ENCODE measurements at regions of chr4 and their contacts with region 1.

Region 1: GRCh38 chr4:139603576-139604387 is 47.8 kb upstream of the SETD7 start:
- DNase-seq: peak; percentile 80
- H3K4me3 Mint-ChIP-seq: no peak overlapping the region
- H3K27ac Mint-ChIP-seq: no peak overlapping the region
- H3K4me1 Mint-ChIP-seq: peaks cover 41% of the 10 kb centered on the region
- H3K27me3 Mint-ChIP-seq: no peaks in the 10 kb centered on the region
- CTCF ChIP-seq: peak; percentile 49

Region 2: DNA sequence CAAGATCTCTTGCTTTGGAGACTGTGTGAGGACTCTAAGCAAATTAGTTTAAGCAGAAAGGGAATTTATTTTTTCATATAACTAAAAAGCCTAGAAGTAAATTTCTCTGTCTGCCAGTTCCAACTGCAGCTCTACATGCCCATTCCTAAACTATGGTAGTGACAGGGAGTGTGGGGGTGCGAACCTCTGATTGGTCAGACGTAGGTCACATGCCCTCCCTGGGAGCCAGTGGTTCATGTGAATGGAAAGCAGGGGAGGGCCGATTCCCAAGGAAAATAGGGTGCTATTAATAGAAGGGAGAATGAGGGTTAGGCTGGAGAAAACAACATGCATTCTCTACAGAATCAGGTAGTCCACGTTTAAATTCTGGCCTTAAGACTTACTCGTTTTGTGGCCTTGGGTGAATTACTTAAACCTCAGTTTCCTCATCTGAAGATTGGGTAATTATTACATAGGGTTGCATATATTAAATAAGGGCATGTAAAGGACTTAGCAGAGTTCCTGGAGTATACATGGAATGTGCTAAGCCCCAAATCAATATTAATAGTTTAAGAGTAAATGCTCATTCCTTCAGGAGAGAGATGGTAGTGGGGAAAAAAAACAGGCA is 142.7 kb before region 1 on chr4:
- CTCF ChIA-PET with region 1: no interaction called
- POLR2A ChIA-PET with region 1: no interaction called
- intact Hi-C with region 1: no loop called
- DNase-seq: no peak
- H3K4me3 Mint-ChIP-seq: no peak overlapping the region
- H3K27ac Mint-ChIP-seq: no peak overlapping the region
- H3K4me1 Mint-ChIP-seq: peaks cover 45% of the 10 kb centered on the region
- H3K27me3 Mint-ChIP-seq: no peaks in the 10 kb centered on the region
- CTCF ChIP-seq: no peak

Region 3: DNA sequence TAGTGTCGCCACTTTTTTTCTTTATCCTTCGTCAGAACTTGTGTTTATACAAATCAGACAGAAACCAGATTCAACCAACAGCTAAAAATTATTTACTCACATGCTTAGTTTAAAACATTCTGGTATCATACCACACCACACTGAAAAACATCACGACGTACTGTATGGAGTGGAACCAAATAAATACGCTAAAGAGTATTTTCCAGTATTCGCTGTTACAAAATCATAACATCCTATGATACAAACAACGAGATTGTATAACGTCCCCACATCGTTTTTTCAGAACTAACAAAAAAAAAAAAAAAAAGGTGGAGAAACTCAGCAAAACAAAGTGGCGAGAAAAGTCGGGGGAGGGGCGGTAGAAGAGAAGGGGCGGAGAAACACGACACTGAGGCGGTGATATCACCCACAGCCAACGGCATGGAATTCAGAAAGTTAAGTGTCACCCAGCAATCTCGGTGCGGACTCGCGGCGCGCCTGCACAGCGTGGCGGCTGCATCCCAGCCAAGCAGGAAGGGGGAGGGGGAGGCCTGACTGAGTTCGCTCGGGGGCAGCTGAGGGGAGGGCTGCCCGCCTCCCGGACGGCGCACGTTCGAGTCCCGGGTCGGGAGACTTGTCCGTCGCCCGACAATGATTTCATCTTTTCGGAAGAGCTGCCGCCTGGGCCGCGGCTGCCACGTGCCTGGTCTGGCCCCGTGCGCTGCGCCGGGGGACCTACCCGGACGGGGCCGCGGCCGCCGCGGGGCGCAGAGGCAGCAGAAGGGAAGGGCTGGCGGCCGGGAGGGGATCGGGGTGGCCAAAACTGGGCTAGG is 48.7 kb before region 1 on chr4:
- CTCF ChIA-PET with region 1: interaction called, 10 read pairs
- POLR2A ChIA-PET with region 1: interaction called, 5 read pairs
- intact Hi-C with region 1: loop called (anchors 1 kb)
- DNase-seq: peak; percentile 89
- H3K4me3 Mint-ChIP-seq: peak overlapping the region; percentile 82
- H3K27ac Mint-ChIP-seq: peak overlapping the region; percentile 73
- H3K4me1 Mint-ChIP-seq: peaks cover 25% of the 10 kb centered on the region
- H3K27me3 Mint-ChIP-seq: no peaks in the 10 kb centered on the region
- CTCF ChIP-seq: no peak

Region 4: DNA sequence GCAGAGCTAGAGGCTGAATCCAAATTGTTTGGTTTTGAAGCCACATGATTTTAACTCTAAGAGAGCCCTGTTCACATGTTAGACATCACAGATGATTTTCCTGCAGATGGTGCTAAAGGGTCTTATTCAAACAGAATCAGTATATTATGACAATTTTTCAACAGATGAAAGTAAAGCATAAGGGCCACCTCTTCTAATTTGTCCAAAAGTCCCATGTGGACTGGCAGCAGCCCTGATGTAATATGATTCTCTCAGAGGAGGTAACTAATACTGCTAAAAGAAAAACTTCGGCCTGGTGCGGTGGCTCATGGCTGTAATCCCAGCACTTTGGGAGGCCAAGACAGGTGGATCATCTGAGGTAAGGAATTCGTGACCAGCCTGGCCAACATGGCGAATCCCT is 21.7 kb before region 1 on chr4:
- CTCF ChIA-PET with region 1: interaction called, 16 read pairs
- POLR2A ChIA-PET with region 1: interaction called, 4 read pairs
- intact Hi-C with region 1: no loop called
- DNase-seq: peak; percentile 20
- H3K4me3 Mint-ChIP-seq: no peak overlapping the region
- H3K27ac Mint-ChIP-seq: no peak overlapping the region
- H3K4me1 Mint-ChIP-seq: no peaks in the 10 kb centered on the region
- H3K27me3 Mint-ChIP-seq: no peaks in the 10 kb centered on the region
- CTCF ChIP-seq: no peak

Region 5: DNA sequence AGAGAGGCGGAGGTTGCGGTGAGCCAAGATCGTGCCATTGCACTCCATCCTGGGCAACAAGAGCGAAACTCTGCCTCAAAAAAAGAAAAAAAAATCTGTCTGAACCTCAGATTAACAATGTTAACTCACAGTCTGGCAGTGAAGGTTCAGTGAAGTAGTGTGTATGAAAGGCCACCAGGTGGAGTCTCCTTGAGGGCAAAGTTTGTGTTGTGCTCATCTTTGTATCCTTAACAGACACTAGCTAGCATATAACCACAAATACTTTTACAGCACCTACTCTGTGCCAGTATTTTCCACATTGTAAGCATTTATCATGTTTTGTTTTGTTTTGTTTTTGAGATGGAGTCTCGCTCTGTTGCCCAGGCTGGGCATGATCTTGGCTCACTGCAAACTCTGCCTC is 15.9 kb after region 1 on chr4:
- CTCF ChIA-PET with region 1: interaction called, 20 read pairs
- POLR2A ChIA-PET with region 1: interaction called, 5 read pairs
- intact Hi-C with region 1: no loop called
- DNase-seq: peak; percentile 56
- H3K4me3 Mint-ChIP-seq: no peak overlapping the region
- H3K27ac Mint-ChIP-seq: no peak overlapping the region
- H3K4me1 Mint-ChIP-seq: no peaks in the 10 kb centered on the region
- H3K27me3 Mint-ChIP-seq: no peaks in the 10 kb centered on the region
- CTCF ChIP-seq: peak; percentile 32

Region 6: GRCh38 chr4:139633661-139634060 is 29.9 kb after region 1 on chr4:
- CTCF ChIA-PET with region 1: interaction called, 52 read pairs
- POLR2A ChIA-PET with region 1: no interaction called
- intact Hi-C with region 1: no loop called
- DNase-seq: peak; percentile 55
- H3K4me3 Mint-ChIP-seq: no peak overlapping the region
- H3K27ac Mint-ChIP-seq: peak overlapping the region; percentile 20
- H3K4me1 Mint-ChIP-seq: peaks cover 10% of the 10 kb centered on the region
- H3K27me3 Mint-ChIP-seq: no peaks in the 10 kb centered on the region
- CTCF ChIP-seq: peak; percentile 55

Region 7: DNA sequence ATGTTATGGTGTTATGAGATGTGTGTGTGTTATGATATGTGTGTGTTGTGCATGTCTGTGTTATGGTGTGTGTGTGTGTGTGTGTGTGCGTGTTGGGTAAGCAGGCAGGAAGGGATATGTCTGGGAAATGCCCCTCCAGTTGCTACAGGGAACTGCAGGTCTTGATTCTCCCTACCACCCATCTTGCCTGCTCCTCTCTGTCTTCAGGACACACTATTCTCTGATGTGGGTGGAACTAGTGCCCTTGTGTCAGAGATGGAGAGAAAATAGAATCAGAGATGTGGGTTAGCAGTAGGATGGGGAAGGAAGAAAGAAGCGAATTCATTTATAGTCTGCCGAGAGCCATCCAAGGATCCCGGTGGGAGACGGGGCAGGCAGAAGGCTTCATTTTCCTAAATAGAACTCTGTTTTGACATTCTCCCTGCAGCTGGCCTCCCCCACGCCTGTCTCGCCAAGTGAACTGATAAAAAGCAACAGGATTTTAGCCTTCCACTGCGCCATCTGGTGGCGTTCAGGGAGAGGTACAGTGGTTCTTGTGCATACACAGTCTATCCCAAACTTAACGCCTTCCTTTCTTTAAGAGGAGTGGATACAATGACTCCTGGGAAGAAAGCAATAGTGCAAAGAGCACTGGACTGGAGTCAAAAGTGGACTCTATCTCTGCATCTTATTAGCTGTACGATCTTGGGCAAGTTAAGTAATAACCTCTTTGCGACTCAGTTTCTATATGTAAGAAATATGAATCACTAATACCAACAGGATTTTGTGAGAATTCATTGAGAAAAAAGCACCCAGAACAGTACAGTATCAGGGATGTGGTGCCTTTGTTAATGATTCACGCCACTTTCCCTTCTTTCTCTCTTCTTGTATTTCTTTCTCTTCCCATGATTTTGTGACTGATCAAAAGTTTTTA is 47.8 kb after region 1 on chr4:
- CTCF ChIA-PET with region 1: interaction called, 476 read pairs
- POLR2A ChIA-PET with region 1: interaction called, 10 read pairs
- intact Hi-C with region 1: loop called (anchors 1 kb)
- DNase-seq: peak; percentile 85
- H3K4me3 Mint-ChIP-seq: no peak overlapping the region
- H3K27ac Mint-ChIP-seq: no peak overlapping the region
- H3K4me1 Mint-ChIP-seq: peaks cover 25% of the 10 kb centered on the region
- H3K27me3 Mint-ChIP-seq: no peaks in the 10 kb centered on the region
- CTCF ChIP-seq: peak; percentile 77

Region 8: GRCh38 chr4:140052050-140052449 is 448.3 kb after region 1 on chr4:
- CTCF ChIA-PET with region 1: no interaction called
- POLR2A ChIA-PET with region 1: no interaction called
- intact Hi-C with region 1: loop called (anchors 5 kb)
- DNase-seq: peak; percentile 47
- H3K4me3 Mint-ChIP-seq: no peak overlapping the region
- H3K27ac Mint-ChIP-seq: no peak overlapping the region
- H3K4me1 Mint-ChIP-seq: peaks cover 13% of the 10 kb centered on the region
- H3K27me3 Mint-ChIP-seq: no peaks in the 10 kb centered on the region
- CTCF ChIP-seq: peak; percentile 57